Kidney (tissue), 22 donors: ENCODE measurements at regions of chr18 and their contacts with region 1.

Region 1: DNA sequence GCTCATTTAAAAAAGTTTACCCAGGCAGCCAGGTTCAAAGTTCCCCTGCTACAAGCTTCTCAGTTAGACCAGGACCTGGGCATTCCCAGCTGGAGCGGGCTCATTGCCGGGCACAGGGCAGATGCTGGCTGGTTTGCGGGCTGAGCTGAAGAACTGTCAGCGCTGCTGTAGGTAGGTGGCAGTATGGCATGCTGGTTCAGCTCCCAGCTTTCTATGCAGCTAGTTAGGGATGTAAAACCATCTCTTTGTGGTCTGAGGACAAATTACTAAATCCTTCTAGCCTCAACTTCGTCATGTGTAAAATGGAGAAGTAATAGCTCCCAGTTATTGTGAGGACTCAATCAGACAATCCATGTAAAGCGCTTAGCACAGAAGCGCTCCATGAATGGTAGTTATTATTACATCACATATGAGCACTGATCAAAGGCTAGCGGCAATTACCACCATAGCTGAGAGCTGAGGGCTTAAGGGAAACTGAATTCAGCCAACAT is 2.4 kb upstream of the LDLRAD4 start:
- DNase-seq: peak; percentile 76 to 87 (median 86)
- H3K4me3 ChIP-seq: peak overlapping the region in 1 of 3 donors; percentile 51
- H3K27ac ChIP-seq: peak overlapping the region in 1 of 2 donors; percentile 5
- H3K4me1 ChIP-seq: peaks cover 0 to 14% (median 7%) of the 10 kb centered on the region in 3 donors
- H3K27me3 ChIP-seq: no peaks in the 10 kb centered on the region
- CTCF ChIP-seq: peak; percentile 64

Region 2: GRCh38 chr18:12890506-12890905 is 325.6 kb before region 1 on chr18:
- intact Hi-C with region 1: no loop called
- DNase-seq: no peak
- H3K4me3 ChIP-seq: no peak overlapping the region
- H3K27ac ChIP-seq: no peak overlapping the region
- H3K4me1 ChIP-seq: no peaks in the 10 kb centered on the region
- H3K27me3 ChIP-seq: no peaks in the 10 kb centered on the region
- CTCF ChIP-seq: peak; percentile 7

Region 3: GRCh38 chr18:12929477-12930083 is 286.6 kb before region 1 on chr18:
- intact Hi-C with region 1: no loop called
- DNase-seq: no peak
- H3K4me3 ChIP-seq: no peak overlapping the region
- H3K27ac ChIP-seq: no peak overlapping the region
- H3K4me1 ChIP-seq: no peaks in the 10 kb centered on the region
- H3K27me3 ChIP-seq: no peaks in the 10 kb centered on the region
- CTCF ChIP-seq: no peak

Region 4: GRCh38 chr18:13530879-13531387 is 314.8 kb after region 1 on chr18:
- intact Hi-C with region 1: loop called (anchors 10 kb)
- DNase-seq: peak in 3 of 5 donors; percentile 59 to 71 (median 64)
- H3K4me3 ChIP-seq: no peak overlapping the region
- H3K27ac ChIP-seq: no peak overlapping the region
- H3K4me1 ChIP-seq: no peaks in the 10 kb centered on the region
- H3K27me3 ChIP-seq: no peaks in the 10 kb centered on the region
- CTCF ChIP-seq: peak; percentile 55

Region 5: DNA sequence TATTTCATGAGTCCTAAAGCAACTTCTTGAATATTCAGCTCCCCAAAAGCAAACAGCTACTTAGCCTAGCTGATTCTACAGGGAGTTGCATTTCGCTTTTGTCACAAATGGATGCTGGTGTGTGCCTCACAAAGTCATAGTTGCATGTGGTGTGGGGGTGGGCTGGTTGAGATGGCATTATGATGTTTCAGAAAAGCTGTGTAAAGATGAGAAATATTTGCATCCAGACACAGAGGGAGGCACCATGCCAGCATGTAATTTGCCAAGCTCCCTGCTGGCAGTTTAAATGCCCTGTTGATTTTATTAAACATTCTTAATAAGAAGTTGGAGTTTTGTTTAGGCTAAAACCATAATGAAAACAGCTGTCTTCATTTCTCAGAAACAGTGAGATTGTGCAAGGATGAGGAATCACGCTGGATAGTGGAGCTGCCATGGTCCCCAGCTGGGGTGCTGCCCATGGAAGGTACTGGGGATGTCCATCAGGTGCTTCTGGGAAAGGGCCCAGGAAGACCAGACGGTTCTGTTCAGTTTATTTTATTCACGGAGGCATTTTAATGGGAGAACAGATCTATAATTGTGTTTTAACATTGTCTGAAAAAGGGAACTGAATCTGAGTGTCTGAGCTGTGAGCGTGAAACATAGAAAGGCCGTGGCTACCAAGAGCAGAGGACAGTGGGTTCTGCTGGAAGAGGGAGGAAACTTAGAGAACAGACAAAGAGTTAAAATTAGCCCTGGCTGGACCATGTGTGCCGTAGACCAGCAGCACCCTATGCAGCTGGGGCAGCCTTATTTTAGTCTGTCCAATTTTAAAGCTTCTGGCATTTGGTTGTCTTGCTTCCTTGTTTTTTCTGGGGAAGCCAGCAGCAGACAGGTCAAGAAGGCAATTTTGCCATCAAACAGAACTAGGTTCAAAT is 333.1 kb after region 1 on chr18:
- intact Hi-C with region 1: no loop called
- DNase-seq: no peak
- H3K4me3 ChIP-seq: no peak overlapping the region
- H3K27ac ChIP-seq: no peak overlapping the region
- H3K4me1 ChIP-seq: peaks cover 0 to 5% (median 0%) of the 10 kb centered on the region in 3 donors
- H3K27me3 ChIP-seq: no peaks in the 10 kb centered on the region
- CTCF ChIP-seq: no peak

Region 6: DNA sequence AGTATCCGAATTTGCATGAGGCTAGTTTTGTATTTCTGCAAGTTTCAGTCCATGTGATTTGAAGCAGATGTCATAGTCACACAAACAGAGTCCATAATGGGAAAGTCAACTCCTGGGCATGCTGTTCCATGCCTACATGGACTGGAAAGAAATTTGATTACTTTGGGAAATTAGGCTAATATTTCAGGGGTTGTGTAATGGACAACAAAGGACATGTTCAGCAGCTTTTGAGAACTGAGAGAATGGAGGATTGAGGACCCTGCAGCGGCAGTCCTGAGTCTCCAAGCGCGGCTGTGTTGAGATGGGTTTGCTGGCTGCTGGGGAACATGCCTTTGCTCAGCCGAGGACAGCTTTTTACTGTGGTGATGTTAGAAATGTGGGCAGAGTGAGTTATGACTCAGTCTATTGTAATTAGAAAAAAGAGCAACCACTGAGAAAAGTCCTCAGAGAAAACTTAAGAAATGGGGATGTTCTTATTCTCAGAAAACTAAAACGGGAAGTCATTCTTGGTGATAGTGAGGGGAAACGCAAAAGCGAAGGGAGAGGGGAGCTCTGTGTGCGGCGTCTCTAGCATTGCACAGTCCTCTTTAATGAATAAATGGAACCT is 361.1 kb after region 1 on chr18:
- intact Hi-C with region 1: no loop called
- DNase-seq: no peak
- H3K4me3 ChIP-seq: no peak overlapping the region
- H3K27ac ChIP-seq: no peak overlapping the region
- H3K4me1 ChIP-seq: no peaks in the 10 kb centered on the region
- H3K27me3 ChIP-seq: no peaks in the 10 kb centered on the region
- CTCF ChIP-seq: no peak